Activated CD4-positive, alpha-beta T cell treated with anti-CD3 and anti-CD28 coated beads, Interleukin-2, amount 10 ng/mL, durations not matched to agents 24 days and 14 days (primary cell): ENCODE measurements at regions of chr1 and their contacts with region 1.

Region 1: GRCh38 chr1:193700710-193701355 is 514.4 kb upstream of the B3GALT2 start:
- DNase-seq: no peak
- H3K4me3 Mint-ChIP-seq: peak overlapping the region; percentile 4
- H3K27ac Mint-ChIP-seq: peak overlapping the region; percentile 17
- H3K4me1 Mint-ChIP-seq: peaks cover 13% of the 10 kb centered on the region
- H3K27me3 Mint-ChIP-seq: no peaks in the 10 kb centered on the region

Region 2: DNA sequence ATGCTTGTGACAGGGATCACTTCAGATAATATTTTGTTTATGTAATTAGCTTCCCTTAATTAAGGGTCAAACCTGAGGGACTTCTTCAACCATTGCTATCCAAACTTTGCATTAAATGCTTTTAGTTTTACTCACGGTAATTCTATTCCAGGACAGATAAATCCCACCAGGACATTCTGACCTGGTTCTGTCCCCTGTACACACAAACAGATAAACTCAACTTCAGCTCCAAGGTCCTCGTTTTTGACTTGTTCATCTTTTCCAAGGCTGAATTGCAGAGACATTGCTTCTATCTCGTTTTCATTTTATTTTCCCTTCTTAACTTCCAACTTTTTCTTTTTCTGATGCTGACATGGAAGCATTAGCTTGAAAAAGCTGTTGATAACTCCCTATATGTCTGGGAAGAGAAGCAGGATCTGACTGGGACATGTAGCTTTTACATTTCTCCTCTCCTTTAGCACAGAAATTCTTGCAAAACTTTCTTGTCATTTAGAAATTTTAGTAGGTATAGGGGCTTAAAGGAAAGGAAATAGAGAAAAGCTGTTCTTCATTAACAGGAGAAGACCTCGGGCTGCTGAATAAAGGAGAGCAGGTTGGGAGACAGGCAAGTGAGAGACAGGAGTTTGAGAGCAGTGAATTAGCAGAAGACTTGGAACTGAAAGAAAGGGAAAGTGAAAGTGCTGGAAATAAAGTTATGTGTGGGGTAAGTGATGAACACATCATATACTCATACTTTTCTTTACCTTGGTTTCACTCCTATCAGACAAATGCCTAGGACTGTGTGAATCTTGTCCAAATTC is 282.7 kb before region 1 on chr1:
- intact Hi-C with region 1: loop called (anchors 10 kb)
- DNase-seq: peak; percentile 73
- H3K4me3 Mint-ChIP-seq: peak overlapping the region; percentile 76
- H3K27ac Mint-ChIP-seq: peak overlapping the region; percentile 67
- H3K4me1 Mint-ChIP-seq: peaks cover 38% of the 10 kb centered on the region
- H3K27me3 Mint-ChIP-seq: no peaks in the 10 kb centered on the region

Region 3: GRCh38 chr1:193437785-193438184 is 263.0 kb before region 1 on chr1:
- intact Hi-C with region 1: loop called (anchors 5 kb)
- DNase-seq: peak; percentile 79
- H3K4me3 Mint-ChIP-seq: peak overlapping the region; percentile 48
- H3K27ac Mint-ChIP-seq: peak overlapping the region; percentile 81
- H3K4me1 Mint-ChIP-seq: peaks cover 29% of the 10 kb centered on the region
- H3K27me3 Mint-ChIP-seq: no peaks in the 10 kb centered on the region

Region 4: GRCh38 chr1:193569096-193569982 is 131.5 kb before region 1 on chr1:
- intact Hi-C with region 1: loop called (anchors 1 kb)
- DNase-seq: peak; percentile 78
- H3K4me3 Mint-ChIP-seq: peak overlapping the region; percentile 4
- H3K27ac Mint-ChIP-seq: peak overlapping the region; percentile 84
- H3K4me1 Mint-ChIP-seq: peaks cover 20% of the 10 kb centered on the region
- H3K27me3 Mint-ChIP-seq: no peaks in the 10 kb centered on the region

Region 5: GRCh38 chr1:193799948-193800690 is 99.3 kb after region 1 on chr1:
- intact Hi-C with region 1: loop called (anchors 10 kb)
- DNase-seq: no peak
- H3K4me3 Mint-ChIP-seq: no peak overlapping the region
- H3K27ac Mint-ChIP-seq: peak overlapping the region; percentile 11
- H3K4me1 Mint-ChIP-seq: peaks cover 6% of the 10 kb centered on the region
- H3K27me3 Mint-ChIP-seq: no peaks in the 10 kb centered on the region